ENCODE measurements at regions of chr7 and their contacts with region 1.

Region 1: DNA sequence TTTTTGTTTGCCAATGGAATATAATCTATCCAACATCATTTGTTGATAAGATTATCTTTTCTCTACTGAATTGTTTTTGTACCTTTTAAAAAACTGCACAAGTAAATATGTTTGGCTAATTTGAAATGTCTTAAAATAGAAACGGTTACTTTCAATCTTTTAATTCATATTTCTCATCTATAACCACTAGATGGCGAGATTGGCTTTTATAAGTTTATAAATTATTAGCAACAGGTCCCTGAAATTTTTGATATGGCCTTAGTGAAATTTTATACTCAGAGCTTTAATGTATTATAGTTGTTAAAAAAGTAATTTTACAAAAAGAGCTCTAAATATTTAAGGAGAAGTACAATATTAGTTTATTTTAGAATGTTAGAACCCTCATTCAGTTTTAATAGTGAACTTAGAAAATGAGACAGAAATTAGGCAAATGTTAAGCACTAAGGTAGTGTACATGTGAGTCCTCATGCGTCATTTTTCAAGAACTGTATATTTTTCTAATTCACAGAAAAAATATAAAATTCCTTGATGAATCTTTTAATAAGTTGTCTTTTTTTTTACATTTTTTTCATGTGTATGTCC is 592.5 kb downstream of the ARL4A start:
- DNase-seq: no peak
- H3K4me3 ChIP-seq: no peak overlapping the region
- H3K27ac ChIP-seq: no peak overlapping the region
- H3K27me3 ChIP-seq: peaks cover 0 to 4% (median 0%) of the 10 kb centered on the region in 45 donors
- CTCF ChIP-seq: peak; percentile 42 to 85 (median 70)

Region 2: DNA sequence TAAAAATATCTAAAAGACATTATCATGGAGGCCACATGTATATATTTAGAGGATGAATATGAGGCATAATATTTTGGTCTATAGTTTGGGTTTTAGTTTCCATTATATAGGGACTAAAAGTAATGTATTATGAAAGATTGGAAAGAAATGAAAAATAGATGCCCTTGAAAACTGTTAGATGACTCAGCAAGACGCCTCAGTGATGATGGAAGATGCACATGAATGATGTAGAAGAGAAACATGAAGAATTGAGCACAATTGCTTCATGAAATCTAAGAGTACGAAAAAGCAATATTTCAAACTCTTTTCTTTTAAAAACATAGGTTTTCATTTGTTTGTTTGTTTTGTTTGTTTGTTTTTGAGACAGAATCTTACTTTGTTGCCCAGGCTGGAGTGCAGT is 502.7 kb before region 1 on chr7:
- intact Hi-C with region 1: no loop called
- DNase-seq: no peak
- H3K4me3 ChIP-seq: no peak overlapping the region
- H3K27ac ChIP-seq: no peak overlapping the region
- H3K27me3 ChIP-seq: no peaks in the 10 kb centered on the region
- CTCF ChIP-seq: no peak

Region 3: DNA sequence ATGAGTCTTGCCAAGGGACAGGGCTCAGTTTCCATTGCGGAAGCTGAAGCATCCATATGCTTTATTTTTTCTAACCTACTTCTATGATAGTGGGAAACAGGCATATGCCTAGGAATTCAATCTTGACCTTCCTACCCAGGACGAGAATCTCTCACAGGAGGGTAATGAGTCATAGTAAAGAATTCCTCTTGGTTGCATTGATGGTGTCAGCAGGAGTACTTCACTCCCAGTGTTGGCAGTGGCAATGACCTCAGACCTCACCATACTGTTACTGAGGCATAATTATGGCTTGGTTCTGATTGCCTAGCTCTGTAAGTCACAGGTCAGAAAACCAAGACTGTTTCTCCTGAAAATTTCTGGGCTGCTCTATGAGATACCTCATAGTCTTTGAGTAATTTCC is 39.6 kb before region 1 on chr7:
- intact Hi-C with region 1: no loop called
- DNase-seq: no peak
- H3K4me3 ChIP-seq: no peak overlapping the region
- H3K27ac ChIP-seq: no peak overlapping the region
- H3K27me3 ChIP-seq: no peaks in the 10 kb centered on the region
- CTCF ChIP-seq: no peak

Region 4: DNA sequence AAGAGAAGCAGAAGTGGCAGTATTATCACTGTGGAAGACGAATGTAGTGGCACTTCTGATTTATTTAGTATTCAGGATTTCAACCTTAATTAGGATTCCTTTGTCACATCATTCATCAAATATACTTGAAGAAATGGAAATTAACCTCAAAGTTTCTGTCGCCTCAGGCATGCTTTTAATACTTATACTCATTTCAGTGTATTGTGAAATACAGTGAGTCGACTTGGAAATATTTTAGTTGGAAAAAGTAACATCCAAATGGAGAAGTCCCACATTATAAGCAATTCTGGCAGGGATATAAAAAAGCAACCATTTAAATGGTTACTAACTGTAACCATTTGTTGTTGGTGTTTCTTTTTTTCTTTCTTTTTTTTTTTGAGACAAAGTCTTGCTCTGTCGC is 56.3 kb after region 1 on chr7:
- intact Hi-C with region 1: no loop called
- DNase-seq: no peak
- H3K4me3 ChIP-seq: no peak overlapping the region
- H3K27ac ChIP-seq: no peak overlapping the region
- H3K27me3 ChIP-seq: no peaks in the 10 kb centered on the region
- CTCF ChIP-seq: no peak

Region 5: GRCh38 chr7:13742811-13743210 is 462.9 kb after region 1 on chr7:
- intact Hi-C with region 1: loop called (anchors 5 to 10 kb)
- DNase-seq: peak in 6 of 10 donors; percentile 34 to 68 (median 56)
- H3K4me3 ChIP-seq: no peak overlapping the region
- H3K27ac ChIP-seq: peak overlapping the region in 1 of 59 donors; percentile 83
- H3K27me3 ChIP-seq: no peaks in the 10 kb centered on the region
- CTCF ChIP-seq: peak in 55 of 56 donors; percentile 43 to 78 (median 66)

Region 6: GRCh38 chr7:14691597-14692203 is 1411.8 kb after region 1 on chr7:
- intact Hi-C with region 1: loop called in 1 of 2 experiments (anchors 5 kb)
- DNase-seq: peak in 9 of 10 donors; percentile 32 to 81 (median 58)
- H3K4me3 ChIP-seq: no peak overlapping the region
- H3K27ac ChIP-seq: no peak overlapping the region
- H3K27me3 ChIP-seq: no peaks in the 10 kb centered on the region
- CTCF ChIP-seq: peak; percentile 67 to 93 (median 86)